Activated CD4-positive, alpha-beta T cell treated with anti-CD3 and anti-CD28 coated beads, Interleukin-2, amount 10 ng/mL, durations not matched to agents 24 days and 14 days (primary cell): ENCODE measurements at regions of chr2 and their contacts with region 1.

Region 1: DNA sequence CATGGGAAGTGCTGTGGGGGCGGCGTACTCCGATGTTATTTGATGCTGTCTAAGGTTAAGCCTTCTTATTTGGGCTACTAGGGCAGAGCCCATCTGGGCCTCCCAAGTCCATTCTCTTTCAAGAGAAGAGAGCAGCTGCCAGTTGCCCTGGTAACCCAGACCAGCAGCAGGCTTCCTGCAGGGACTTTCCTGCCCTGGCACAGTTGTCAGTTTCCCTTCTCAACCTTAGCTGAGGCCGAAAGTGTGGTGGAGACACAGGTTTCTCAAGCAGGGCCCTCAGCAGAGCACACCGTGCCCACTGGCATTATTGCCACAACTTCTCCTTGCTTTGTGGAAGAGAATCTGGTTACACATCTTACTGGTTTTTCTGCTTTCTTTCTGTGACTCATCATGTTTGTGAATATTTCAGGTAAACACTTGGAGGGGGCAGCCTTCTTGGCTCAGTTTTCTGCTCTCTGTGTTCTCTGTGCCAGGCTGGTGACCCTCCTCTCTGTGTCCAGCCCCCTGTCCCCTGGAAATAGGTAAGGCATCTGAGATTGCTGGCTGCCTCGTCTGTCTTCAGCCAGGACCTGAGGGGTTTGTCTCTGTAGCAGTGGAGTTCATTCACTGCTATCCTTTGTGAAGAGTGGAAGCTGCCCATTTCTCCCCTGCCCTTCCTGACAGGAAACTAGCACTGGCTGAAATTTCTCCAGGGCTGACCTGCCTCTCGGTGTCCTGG is 111.0 kb downstream of the B3GNT2 start:
- DNase-seq: peak; percentile 82
- H3K4me3 Mint-ChIP-seq: peak overlapping the region; percentile 60
- H3K27ac Mint-ChIP-seq: peak overlapping the region; percentile 94
- H3K4me1 Mint-ChIP-seq: peaks cover 71% of the 10 kb centered on the region
- H3K27me3 Mint-ChIP-seq: peaks cover 1% of the 10 kb centered on the region

Region 2: GRCh38 chr2:61905372-61906185 is 401.3 kb before region 1 on chr2 and contains the start of gene COMMD1:
- intact Hi-C with region 1: loop called (anchors 5 kb)
- DNase-seq: peak; percentile 95
- H3K4me3 Mint-ChIP-seq: peak within 1 kb of the TSS; percentile 89
- H3K27ac Mint-ChIP-seq: peak within 1 kb of the TSS; percentile 82
- H3K4me1 Mint-ChIP-seq: peaks cover 10% of the 10 kb centered on the region
- H3K27me3 Mint-ChIP-seq: no peaks in the 10 kb centered on the region
- total RNA-seq, gene COMMD1: 27.2 and 27.6 TPM in 2 replicates